ENCODE measurements at regions of chr14 and their contacts with region 1.

Region 1: GRCh38 chr14:61750708-61751474 is 11.3 kb upstream of the SNAPC1 start:
- DNase-seq: peak; percentile 81
- ATAC-seq: peak; percentile 95
- H3K4me3 Mint-ChIP-seq: peak overlapping the region; percentile 87
- H3K27ac Mint-ChIP-seq: peak overlapping the region; percentile 90
- H3K4me1 Mint-ChIP-seq: peaks cover 41% of the 10 kb centered on the region
- H3K27me3 Mint-ChIP-seq: no peaks in the 10 kb centered on the region
- CTCF ChIP-seq: no peak

Region 2: GRCh38 chr14:61321385-61322010 is 429.4 kb before region 1 on chr14 and contains the start of gene PRKCH:
- CTCF ChIA-PET with region 1: no interaction called
- POLR2A ChIA-PET with region 1: no interaction called
- intact Hi-C with region 1: loop called (anchors 10 kb)
- DNase-seq: peak; percentile 42
- ATAC-seq: peak; percentile 82
- H3K4me3 Mint-ChIP-seq: peak within 1 kb of the TSS; percentile 87
- H3K27ac Mint-ChIP-seq: peak within 1 kb of the TSS; percentile 72
- H3K4me1 Mint-ChIP-seq: peaks cover 17% of the 10 kb centered on the region
- H3K27me3 Mint-ChIP-seq: peaks cover 6% of the 10 kb centered on the region
- CTCF ChIP-seq: no peak
- total RNA-seq, gene PRKCH: 4.6 and 4.7 TPM in 2 replicates

Region 3: GRCh38 chr14:61737915-61738314 is 13.0 kb before region 1 on chr14:
- CTCF ChIA-PET with region 1: no interaction called
- POLR2A ChIA-PET with region 1: interaction called, 4 read pairs
- intact Hi-C with region 1: loop called (anchors 1 kb)
- DNase-seq: no peak
- ATAC-seq: no peak
- H3K4me3 Mint-ChIP-seq: no peak overlapping the region
- H3K27ac Mint-ChIP-seq: peak overlapping the region; percentile 76
- H3K4me1 Mint-ChIP-seq: peaks cover 12% of the 10 kb centered on the region
- H3K27me3 Mint-ChIP-seq: no peaks in the 10 kb centered on the region
- CTCF ChIP-seq: no peak

Region 4: DNA sequence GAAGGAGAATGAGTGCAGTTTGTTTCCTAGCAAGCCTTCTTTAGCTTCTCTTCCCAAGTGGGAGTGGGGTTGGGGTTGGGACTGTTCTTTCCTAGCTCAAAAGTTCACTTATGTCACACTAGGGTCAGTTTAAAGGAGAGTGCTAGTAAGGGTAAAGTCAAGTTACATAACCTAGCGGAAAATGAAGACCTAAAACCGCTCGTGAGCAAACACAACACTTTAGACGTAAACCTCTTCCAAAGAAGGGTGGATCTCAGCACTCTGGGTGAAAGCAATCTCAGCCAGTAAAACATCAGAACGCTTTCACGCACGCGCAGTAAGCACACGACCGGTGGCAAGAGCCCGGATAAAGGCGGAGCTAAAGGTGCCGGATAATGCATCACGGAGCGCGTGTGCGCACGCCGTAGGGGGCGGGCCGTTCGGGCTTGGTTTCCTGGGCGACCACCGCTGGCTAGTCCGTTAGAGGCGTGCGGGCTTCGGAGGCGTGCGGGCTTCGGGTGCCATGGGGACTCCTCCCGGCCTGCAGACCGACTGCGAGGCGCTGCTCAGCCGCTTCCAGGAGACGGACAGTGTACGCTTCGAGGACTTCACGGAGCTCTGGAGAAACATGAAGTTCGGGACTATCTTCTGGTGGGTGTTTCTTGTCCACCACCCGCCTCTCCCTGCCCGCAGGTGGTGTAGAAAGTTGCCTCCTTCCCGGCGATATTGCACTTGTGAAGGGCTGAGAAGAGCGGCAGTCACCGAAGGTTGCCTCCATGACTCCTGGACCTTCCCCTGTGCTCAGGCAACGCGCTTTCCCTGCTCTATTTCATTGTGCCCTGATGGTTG is 11.3 kb after region 1 on chr14 and contains the start of gene SNAPC1:
- CTCF ChIA-PET with region 1: interaction called, 3 read pairs
- POLR2A ChIA-PET with region 1: interaction called, 50 read pairs
- intact Hi-C with region 1: loop called (anchors 1 kb)
- DNase-seq: peak; percentile 90
- ATAC-seq: peak; percentile 98
- H3K4me3 Mint-ChIP-seq: peak within 1 kb of the TSS; percentile 95
- H3K27ac Mint-ChIP-seq: peak within 1 kb of the TSS; percentile 95
- H3K4me1 Mint-ChIP-seq: peaks cover 31% of the 10 kb centered on the region
- H3K27me3 Mint-ChIP-seq: no peaks in the 10 kb centered on the region
- CTCF ChIP-seq: no peak
- total RNA-seq, gene SNAPC1: 5.2 TPM in 2 replicates